Prostate gland (tissue), 2 donors: ENCODE measurements at regions of chr2 and their contacts with region 1.

Region 1: GRCh38 chr2:27356382-27357181 is at the start of gene GTF3C2:
- DNase-seq: peak; percentile 94
- H3K4me3 ChIP-seq: peak within 1 kb of the TSS; percentile 70 to 87
- H3K27ac ChIP-seq: peak within 1 kb of the TSS; percentile 79 to 83
- H3K4me1 ChIP-seq: peaks cover 4% of the 10 kb centered on the region
- H3K27me3 ChIP-seq: no peaks in the 10 kb centered on the region
- CTCF ChIP-seq: no peak
- POLR2A ChIP-seq: peak; percentile 42
- total RNA-seq, gene GTF3C2: 41.2 to 66.1 TPM

Region 2: GRCh38 chr2:27322766-27323595 is 33.6 kb before region 1 on chr2 and contains the start of gene MPV17:
- intact Hi-C with region 1: loop called (anchors 5 kb)
- DNase-seq: peak; percentile 92
- H3K4me3 ChIP-seq: peak within 1 kb of the TSS; percentile 61 to 64
- H3K27ac ChIP-seq: peak within 1 kb of the TSS; percentile 87 to 92
- H3K4me1 ChIP-seq: peaks cover 10% of the 10 kb centered on the region
- H3K27me3 ChIP-seq: no peaks in the 10 kb centered on the region
- CTCF ChIP-seq: no peak
- POLR2A ChIP-seq: peak; percentile 84
- total RNA-seq, gene MPV17: 82.5 to 90.3 TPM